Activated CD4-positive, alpha-beta memory T cell treated with anti-CD3 and anti-CD28 coated beads for 36 hours (primary cell): ENCODE measurements at regions of chr19 and their contacts with region 1.

Region 1: DNA sequence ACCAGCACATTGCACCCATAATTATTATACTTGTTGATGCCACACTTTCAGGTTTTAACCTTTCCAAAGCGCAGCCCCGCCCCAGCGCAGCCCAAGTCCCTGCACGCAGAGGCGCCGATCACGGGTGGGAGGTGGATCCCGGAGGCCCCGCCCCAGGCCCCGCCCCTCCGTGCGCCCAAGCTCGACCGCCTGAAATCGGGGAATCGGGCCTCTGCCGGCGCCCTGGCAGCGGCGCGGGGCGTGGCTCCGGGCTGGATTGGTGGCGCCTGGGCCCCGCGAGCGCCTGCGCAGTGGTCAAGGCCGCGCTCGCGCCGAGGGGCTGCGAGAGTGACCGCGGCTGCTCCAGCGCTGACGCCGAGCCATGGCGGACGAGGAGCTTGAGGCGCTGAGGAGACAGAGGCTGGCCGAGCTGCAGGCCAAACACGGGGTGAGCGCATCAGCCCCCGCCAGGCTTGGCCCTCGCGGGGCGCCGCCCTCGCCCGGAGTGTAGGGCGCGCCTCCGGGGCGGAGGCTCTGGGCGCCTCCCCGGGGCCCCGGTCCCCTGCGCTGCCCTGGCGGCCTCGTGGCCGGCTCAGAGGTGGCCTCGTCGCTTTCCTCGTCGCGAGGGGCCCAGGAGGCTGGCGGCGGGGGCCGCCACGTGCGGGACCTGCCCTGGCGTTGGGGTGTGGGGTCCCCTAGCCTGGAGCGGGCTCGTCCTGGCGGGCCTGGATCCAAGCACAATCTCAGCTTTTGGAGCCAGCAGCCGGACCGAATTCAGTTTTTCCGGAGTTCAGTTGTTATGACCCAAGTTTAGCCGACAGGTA is at the start of gene PDCD5:
- DNase-seq: peak; percentile 98
- H3K4me3 Mint-ChIP-seq: peak within 1 kb of the TSS; percentile 89
- H3K27ac Mint-ChIP-seq: peak within 1 kb of the TSS; percentile 76
- H3K4me1 Mint-ChIP-seq: peaks cover 28% of the 10 kb centered on the region
- H3K27me3 Mint-ChIP-seq: no peaks in the 10 kb centered on the region
- total RNA-seq, gene PDCD5: 242 to 246 TPM

Region 2: GRCh38 chr19:32345261-32346207 is 235.6 kb before region 1 on chr19 and contains the start of gene ZNF507:
- CTCF ChIA-PET with region 1: no interaction called
- POLR2A ChIA-PET with region 1: no interaction called
- intact Hi-C with region 1: loop called (anchors 5 kb)
- DNase-seq: peak; percentile 90
- H3K4me3 Mint-ChIP-seq: peak within 1 kb of the TSS; percentile 97
- H3K27ac Mint-ChIP-seq: peak within 1 kb of the TSS; percentile 84
- H3K4me1 Mint-ChIP-seq: peaks cover 42% of the 10 kb centered on the region
- H3K27me3 Mint-ChIP-seq: peaks cover 3% of the 10 kb centered on the region
- total RNA-seq, gene ZNF507: 20.8 to 21.0 TPM

Region 3: DNA sequence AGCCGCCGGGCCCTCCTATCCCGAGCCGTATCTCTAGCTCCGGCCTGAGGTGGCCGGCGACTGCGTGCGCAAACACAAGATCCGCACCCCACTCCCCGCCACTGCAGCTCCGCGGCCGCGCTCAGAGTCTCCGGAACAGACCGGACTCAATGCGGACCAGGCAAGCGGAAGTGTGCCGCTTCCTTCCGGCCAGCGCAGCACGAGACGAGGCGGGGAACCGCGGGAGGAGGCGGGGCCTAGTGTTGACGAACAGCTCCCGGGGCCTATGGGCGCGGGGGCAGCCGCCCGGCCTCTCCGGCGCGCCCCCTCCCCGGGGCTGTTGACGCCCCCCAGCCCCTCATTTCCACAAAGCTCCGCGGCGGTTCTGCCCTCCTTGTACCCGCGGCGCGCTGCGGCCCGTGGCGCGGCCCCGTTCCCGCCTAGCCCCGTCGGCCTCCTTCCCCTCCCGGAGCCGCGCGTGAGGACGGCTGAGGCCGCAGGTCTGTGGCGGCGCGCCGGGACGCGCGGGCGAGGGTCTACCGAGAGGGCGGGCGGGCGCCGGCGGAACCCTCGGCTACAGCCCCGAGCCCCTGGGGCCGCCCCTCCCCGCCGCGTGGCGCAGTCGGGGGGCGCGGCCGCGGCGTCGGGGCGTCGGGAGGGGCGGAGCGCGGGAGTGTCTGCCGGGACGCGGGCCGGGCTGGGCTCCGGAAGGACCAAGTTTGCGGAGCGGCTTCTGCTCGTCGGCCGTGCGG is 175.5 kb before region 1 on chr19 and contains the start of gene DPY19L3:
- CTCF ChIA-PET with region 1: no interaction called
- POLR2A ChIA-PET with region 1: interaction called, 8 read pairs
- intact Hi-C with region 1: loop called (anchors 5 kb)
- DNase-seq: peak; percentile 95
- H3K4me3 Mint-ChIP-seq: peak within 1 kb of the TSS; percentile 84
- H3K27ac Mint-ChIP-seq: peak within 1 kb of the TSS; percentile 91
- H3K4me1 Mint-ChIP-seq: peaks cover 12% of the 10 kb centered on the region
- H3K27me3 Mint-ChIP-seq: no peaks in the 10 kb centered on the region
- total RNA-seq, gene DPY19L3: 12.4 to 14.9 TPM

Region 4: GRCh38 chr19:32421589-32422361 is 159.3 kb before region 1 on chr19:
- CTCF ChIA-PET with region 1: no interaction called
- POLR2A ChIA-PET with region 1: no interaction called
- intact Hi-C with region 1: no loop called
- DNase-seq: no peak
- H3K4me3 Mint-ChIP-seq: no peak overlapping the region
- H3K27ac Mint-ChIP-seq: peak overlapping the region; percentile 0
- H3K4me1 Mint-ChIP-seq: peaks cover 9% of the 10 kb centered on the region
- H3K27me3 Mint-ChIP-seq: no peaks in the 10 kb centered on the region

Region 5: DNA sequence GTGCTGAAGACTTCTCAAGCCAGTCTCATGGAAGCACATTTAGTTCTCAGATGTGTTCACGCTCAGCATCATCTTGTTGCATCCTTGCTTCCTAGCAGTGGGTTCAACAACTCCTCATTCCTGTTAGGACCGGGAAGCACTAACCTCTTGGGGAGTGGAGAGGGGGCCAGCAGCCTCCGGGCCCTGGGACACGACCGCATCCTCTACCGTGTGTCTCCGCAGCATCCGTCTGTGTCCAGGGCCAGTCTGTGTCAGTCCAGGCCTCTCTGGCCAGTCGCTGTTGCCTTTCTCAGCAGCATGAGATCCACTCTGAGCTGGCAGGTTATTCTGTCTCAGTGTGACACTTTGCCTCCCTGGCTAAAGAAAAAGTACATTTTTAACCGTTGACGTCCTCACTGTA is 16.9 kb after region 1 on chr19:
- CTCF ChIA-PET with region 1: interaction called, 11 read pairs
- POLR2A ChIA-PET with region 1: no interaction called
- intact Hi-C with region 1: no loop called
- DNase-seq: no peak
- H3K4me3 Mint-ChIP-seq: no peak overlapping the region
- H3K27ac Mint-ChIP-seq: no peak overlapping the region
- H3K4me1 Mint-ChIP-seq: peaks cover 7% of the 10 kb centered on the region
- H3K27me3 Mint-ChIP-seq: no peaks in the 10 kb centered on the region

Region 6: DNA sequence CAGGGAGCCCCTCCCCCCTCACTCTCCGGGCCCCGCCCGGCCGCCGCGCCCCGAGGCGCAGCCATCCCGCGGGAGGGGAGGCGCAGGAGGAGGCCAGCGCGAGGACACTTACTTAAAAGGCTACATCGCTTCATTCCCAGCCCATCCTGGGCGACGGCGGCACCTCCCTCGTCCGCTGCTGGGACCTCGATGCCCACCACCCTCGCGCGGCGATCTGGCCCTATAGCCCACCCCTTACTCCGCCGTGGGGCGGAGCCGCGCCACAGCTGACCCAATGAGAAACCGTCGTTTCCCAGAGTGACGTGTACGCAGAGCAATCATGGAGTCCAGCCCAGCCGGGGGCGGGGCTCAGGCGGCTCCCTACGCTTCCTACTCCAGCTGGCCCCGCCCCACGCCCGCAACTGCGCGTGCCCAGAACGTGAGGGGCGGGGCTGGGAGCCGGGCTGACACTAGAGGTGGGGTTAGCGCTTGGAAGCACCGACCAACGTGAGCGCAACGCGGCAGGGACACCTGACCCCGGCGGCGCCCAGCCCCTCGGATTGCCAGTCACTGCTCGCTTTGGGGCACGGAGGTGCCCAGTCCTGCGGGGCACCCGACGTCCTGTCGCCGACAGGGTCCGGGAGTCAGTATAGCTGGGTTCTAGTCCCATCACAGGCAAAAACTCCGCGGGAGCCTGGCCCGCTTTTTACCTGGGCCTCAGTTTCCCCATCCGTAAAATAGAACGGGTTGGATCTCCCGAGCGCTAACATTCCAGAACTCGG is 94.0 kb after region 1 on chr19 and contains the start of gene ANKRD27:
- CTCF ChIA-PET with region 1: no interaction called
- POLR2A ChIA-PET with region 1: interaction called, 3 read pairs
- intact Hi-C with region 1: loop called (anchors 1 kb)
- DNase-seq: peak; percentile 98
- H3K4me3 Mint-ChIP-seq: peak within 1 kb of the TSS; percentile 92
- H3K27ac Mint-ChIP-seq: peak within 1 kb of the TSS; percentile 67
- H3K4me1 Mint-ChIP-seq: peaks cover 28% of the 10 kb centered on the region
- H3K27me3 Mint-ChIP-seq: peaks cover 11% of the 10 kb centered on the region
- total RNA-seq, gene ANKRD27: 39.7 to 45.4 TPM

Region 7: DNA sequence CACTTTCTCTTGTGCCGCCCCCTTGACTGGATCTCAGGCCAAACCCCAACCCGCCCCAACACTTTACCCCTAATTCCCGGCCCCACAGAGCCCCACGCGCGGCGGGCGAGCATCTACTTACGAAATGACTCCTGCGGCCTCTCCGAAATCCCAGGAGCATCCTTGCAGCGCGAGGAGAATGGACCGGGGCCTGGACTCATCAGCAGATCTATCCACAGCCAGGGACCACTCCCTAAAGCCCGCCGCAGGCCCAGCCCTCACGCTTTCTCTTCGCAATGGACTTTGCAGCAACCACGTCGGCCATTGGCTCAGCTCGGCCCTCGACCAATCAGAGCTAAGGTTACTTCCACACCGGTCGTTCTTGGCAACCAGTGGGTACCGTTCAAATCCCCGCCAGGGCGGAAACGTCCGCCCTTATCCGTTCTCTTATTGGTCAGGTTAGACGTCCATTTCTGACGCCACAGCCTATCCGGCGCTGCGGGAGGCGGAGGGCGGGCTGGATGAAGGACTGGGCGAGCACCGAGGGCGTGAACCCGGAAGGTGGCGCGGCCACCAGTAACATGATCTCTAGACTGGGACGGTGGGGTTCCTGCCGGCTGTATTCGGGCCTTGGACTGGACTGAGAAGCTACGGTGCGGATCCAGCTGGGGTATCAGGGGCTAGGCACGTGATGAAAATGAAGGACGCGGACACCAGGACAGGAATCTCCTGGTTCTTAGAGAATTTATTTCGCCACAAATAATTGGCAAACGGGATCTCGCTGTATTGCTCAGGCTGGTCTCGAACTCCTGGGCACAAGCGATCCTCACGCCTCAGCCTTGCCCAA is 390.8 kb after region 1 on chr19 and contains the starts of genes CEP89 and FAAP24:
- CTCF ChIA-PET with region 1: interaction called, 4 read pairs
- POLR2A ChIA-PET with region 1: no interaction called
- intact Hi-C with region 1: loop called (anchors 5 kb)
- DNase-seq: peak; percentile 99
- H3K4me3 Mint-ChIP-seq: peak within 1 kb of the TSS; percentile 99
- H3K27ac Mint-ChIP-seq: peak within 1 kb of the TSS; percentile 84
- H3K4me1 Mint-ChIP-seq: peaks cover 17% of the 10 kb centered on the region
- H3K27me3 Mint-ChIP-seq: no peaks in the 10 kb centered on the region
- total RNA-seq, gene CEP89: 15.6 to 21.0 TPM
- total RNA-seq, gene FAAP24: 8.1 to 8.3 TPM